ENCODE measurements at regions of chr16 and their contacts with region 1.

Region 1: GRCh38 chr16:71426880-71427615 is 14.8 kb downstream of the TLE7 start:
- DNase-seq: no peak
- ATAC-seq: no peak
- H3K4me3 Mint-ChIP-seq: no peak overlapping the region
- H3K27ac Mint-ChIP-seq: no peak overlapping the region
- H3K4me1 Mint-ChIP-seq: no peaks in the 10 kb centered on the region
- H3K27me3 Mint-ChIP-seq: peaks cover 39% of the 10 kb centered on the region

Region 2: DNA sequence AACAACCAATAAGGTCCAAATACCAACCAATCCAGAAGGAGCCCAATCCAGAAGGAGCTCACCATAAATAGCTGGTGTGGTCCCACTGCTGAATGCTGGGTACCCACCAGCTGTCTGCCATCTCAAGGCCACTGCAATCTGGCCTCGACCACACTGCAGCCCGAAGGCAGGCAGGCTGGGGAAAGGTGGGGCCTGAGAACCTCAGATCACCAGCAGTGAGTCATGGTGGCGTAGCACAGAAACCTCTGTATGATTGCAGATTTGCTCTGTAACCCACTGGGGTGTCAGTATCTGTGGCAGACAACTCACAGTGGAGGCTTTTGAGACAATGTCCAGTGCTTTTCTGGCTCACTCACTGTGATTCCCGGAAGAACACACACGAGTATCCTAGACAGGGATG is 123.1 kb before region 1 on chr16:
- CTCF ChIA-PET with region 1: no interaction called
- POLR2A ChIA-PET with region 1: no interaction called
- intact Hi-C with region 1: no loop called
- DNase-seq: no peak
- ATAC-seq: no peak
- H3K4me3 Mint-ChIP-seq: no peak overlapping the region
- H3K27ac Mint-ChIP-seq: no peak overlapping the region
- H3K4me1 Mint-ChIP-seq: no peaks in the 10 kb centered on the region
- H3K27me3 Mint-ChIP-seq: peaks cover 22% of the 10 kb centered on the region

Region 3: DNA sequence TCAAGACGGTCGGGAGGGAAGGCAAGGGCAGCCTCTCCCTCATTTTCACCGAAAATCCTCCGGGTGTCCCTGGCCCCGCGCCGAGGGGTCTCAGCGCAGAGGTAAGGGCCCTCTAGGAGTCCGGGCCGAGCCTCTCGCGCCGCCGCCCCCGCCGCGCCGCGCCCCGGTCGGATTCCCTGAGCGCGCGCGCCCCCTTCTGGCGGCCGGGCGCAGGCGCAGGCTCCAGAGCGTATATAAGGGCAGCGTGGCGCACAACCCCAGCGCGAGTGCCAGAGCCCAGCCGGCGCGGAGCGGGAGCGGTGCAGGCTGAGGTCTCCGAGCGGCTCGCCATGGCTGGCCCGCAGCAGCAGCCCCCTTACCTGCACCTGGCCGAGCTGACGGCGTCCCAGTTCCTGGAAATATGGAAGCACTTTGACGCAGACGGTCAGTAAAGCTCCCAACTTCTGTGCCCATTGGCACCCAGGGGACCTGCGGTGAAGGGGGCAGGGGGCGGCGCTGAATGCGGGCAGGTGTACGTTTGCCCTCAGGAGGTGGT is 68.5 kb before region 1 on chr16 and contains the start of gene CALB2:
- CTCF ChIA-PET with region 1: no interaction called
- POLR2A ChIA-PET with region 1: no interaction called
- intact Hi-C with region 1: no loop called
- DNase-seq: peak; percentile 82
- ATAC-seq: peak; percentile 98
- H3K4me3 Mint-ChIP-seq: no peak within 1 kb of the TSS
- H3K27ac Mint-ChIP-seq: no peak within 1 kb of the TSS
- H3K4me1 Mint-ChIP-seq: no peaks in the 10 kb centered on the region
- H3K27me3 Mint-ChIP-seq: peaks cover 8% of the 10 kb centered on the region
- total RNA-seq, gene CALB2: not detected

Region 4: GRCh38 chr16:71399801-71400563 is 27.1 kb before region 1 on chr16:
- CTCF ChIA-PET with region 1: no interaction called
- POLR2A ChIA-PET with region 1: no interaction called
- intact Hi-C with region 1: no loop called
- DNase-seq: no peak
- ATAC-seq: no peak
- H3K4me3 Mint-ChIP-seq: no peak overlapping the region
- H3K27ac Mint-ChIP-seq: no peak overlapping the region
- H3K4me1 Mint-ChIP-seq: no peaks in the 10 kb centered on the region
- H3K27me3 Mint-ChIP-seq: peaks cover 10% of the 10 kb centered on the region

Region 5: GRCh38 chr16:71412270-71413160 is 14.5 kb before region 1 on chr16:
- CTCF ChIA-PET with region 1: interaction called, 13 read pairs
- POLR2A ChIA-PET with region 1: no interaction called
- intact Hi-C with region 1: no loop called
- DNase-seq: peak; percentile 82
- ATAC-seq: peak; percentile 85
- H3K4me3 Mint-ChIP-seq: no peak overlapping the region
- H3K27ac Mint-ChIP-seq: no peak overlapping the region
- H3K4me1 Mint-ChIP-seq: no peaks in the 10 kb centered on the region
- H3K27me3 Mint-ChIP-seq: peaks cover 32% of the 10 kb centered on the region